Posterior vena cava (tissue), 2 donors: ENCODE measurements at regions of chr1 and their contacts with region 1.

Region 1: GRCh38 chr1:53134961-53135734 is 7.3 kb downstream of the SLC1A7 start:
- DNase-seq: no peak

Region 2: DNA sequence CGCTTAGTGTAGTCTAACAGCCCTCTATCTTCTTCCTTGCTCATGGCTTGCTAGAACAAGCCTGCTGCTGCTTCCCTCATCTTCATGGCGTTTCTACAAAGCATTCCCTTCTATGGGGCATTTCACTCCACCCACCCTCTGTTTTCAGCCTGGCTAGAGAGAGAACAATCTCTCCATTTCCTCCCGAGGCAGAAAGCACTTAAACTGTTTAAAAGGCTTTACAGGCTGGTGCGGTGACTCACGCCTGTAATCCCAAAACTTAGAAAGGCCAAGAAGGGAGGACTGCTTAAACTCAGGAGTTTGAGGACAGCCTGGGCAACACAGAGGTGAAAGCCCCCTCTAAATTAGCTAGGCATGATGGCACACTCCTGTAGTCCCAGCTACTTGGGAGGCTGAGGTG is 748.7 kb before region 1 on chr1:
- intact Hi-C with region 1: loop called in 1 of 2 experiments (anchors 5 kb)
- DNase-seq: no peak

Region 3: GRCh38 chr1:52404116-52404986 is 730.8 kb before region 1 on chr1 and contains the starts of genes ORC1 and PRPF38A:
- intact Hi-C with region 1: no loop called
- DNase-seq: peak; percentile 99
- total RNA-seq, gene ORC1: 0.46 to 0.52 TPM
- total RNA-seq, gene PRPF38A: 29.6 to 31.6 TPM

Region 4: GRCh38 chr1:53117836-53118235 is 17.3 kb before region 1 on chr1:
- intact Hi-C with region 1: loop called in 1 of 2 experiments (anchors 1 kb)
- DNase-seq: no peak